ENCODE measurements at regions of chr13 and their contacts with region 1.

Region 1: DNA sequence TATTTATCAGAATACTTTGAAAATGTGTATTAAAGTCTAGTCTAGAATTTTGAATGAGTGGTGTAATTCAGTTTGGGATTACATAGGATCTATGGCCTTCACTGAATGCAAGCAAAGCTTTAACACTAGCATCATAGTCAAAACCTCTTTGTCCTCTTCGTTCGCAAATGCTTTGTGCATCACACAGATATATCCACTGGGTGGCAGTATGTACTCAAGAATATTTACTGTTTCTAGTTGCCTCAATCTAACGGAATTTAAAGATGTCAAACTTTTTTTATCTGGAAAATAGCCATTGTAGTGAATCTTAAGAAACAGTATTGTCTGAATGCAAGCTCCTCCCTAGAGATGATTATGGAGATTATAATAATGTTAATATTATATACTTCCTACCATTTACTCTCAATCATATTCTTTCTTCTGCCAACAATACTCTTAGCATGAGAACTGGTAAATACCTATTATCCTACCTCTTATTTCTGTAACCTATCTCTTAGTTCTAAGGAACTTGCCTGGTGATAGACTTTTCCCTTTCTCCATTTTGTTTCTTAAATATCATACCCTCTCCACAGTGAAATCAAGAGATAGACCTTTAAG is 25.8 kb downstream of the LACC1 start:
- DNase-seq: no peak
- H3K4me3 Mint-ChIP-seq: no peak overlapping the region
- H3K27ac Mint-ChIP-seq: no peak overlapping the region
- H3K4me1 Mint-ChIP-seq: no peaks in the 10 kb centered on the region
- H3K27me3 Mint-ChIP-seq: peaks cover 24% of the 10 kb centered on the region

Region 2: DNA sequence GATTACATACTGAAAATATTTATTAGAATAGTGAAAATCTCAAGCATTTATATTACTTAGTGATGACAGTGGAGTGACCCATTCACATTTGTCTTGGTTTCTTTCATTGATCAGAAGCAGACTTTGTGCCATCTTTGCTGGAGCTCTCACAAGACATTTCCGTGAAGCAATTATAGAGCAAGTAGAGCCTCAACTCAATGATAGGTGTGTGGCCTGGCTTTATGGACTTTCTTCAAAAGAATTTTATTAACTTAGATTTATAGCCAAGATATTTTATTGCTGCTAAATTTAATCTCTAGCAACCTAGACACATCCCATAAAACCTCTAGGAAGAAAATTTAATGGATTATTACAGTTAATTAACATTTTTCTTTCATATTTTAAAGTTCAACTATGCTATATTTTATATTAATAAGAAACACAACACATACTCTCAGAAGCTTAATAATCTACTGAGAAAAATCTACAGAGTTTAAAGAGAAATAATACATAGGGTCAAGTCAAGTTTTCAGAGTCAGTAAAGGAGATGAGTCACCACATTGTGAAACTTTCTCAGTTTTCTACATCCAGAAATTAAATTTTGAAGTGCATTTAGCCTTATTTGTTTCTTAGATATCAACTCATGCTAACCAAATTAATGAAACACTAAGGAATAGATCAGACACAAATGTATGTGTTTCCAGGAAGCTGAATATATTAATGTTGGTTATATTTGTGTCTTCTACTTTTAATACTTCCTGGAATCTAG is 134.7 kb after region 1 on chr13:
- intact Hi-C with region 1: no loop called
- DNase-seq: no peak
- H3K4me3 Mint-ChIP-seq: no peak overlapping the region
- H3K27ac Mint-ChIP-seq: no peak overlapping the region
- H3K4me1 Mint-ChIP-seq: no peaks in the 10 kb centered on the region
- H3K27me3 Mint-ChIP-seq: peaks cover 10% of the 10 kb centered on the region

Region 3: DNA sequence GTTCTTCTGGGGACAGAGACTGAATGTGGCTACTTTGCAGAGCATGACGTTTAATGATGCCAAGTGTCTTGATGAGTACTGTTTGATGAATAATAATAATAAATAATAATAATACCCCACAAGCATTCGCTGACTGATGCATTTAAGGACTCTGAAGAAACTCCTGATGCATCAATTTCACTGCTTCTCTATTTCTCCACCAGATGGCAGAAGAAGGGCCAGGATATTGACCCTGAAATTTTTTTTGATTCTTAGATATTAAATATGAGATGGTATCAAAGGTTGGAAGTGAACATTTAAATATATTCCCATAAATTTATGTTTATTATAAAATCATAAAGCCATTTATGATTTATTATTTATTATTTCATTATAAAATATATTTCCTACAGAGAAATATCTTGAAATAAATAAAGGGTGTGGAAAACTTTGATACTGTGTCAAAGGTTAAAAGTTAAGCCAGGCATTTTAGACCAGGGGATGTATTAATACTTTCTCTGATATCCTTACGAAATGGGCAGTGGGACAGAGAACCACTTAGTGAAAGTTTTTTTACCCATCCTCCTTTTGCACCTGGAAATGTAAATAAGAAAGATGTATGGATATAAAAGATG is 145.0 kb after region 1 on chr13:
- intact Hi-C with region 1: loop called (anchors 10 kb)
- DNase-seq: no peak
- H3K4me3 Mint-ChIP-seq: no peak overlapping the region
- H3K27ac Mint-ChIP-seq: no peak overlapping the region
- H3K4me1 Mint-ChIP-seq: peaks cover 2% of the 10 kb centered on the region
- H3K27me3 Mint-ChIP-seq: peaks cover 29% of the 10 kb centered on the region

Region 4: GRCh38 chr13:44470638-44471562 is 565.4 kb after region 1 on chr13:
- intact Hi-C with region 1: loop called (anchors 2 kb)
- DNase-seq: no peak
- H3K4me3 Mint-ChIP-seq: no peak overlapping the region
- H3K27ac Mint-ChIP-seq: no peak overlapping the region
- H3K4me1 Mint-ChIP-seq: no peaks in the 10 kb centered on the region
- H3K27me3 Mint-ChIP-seq: peaks cover 15% of the 10 kb centered on the region